ENCODE measurements at regions of chr4 and their contacts with region 1.

Region 1: DNA sequence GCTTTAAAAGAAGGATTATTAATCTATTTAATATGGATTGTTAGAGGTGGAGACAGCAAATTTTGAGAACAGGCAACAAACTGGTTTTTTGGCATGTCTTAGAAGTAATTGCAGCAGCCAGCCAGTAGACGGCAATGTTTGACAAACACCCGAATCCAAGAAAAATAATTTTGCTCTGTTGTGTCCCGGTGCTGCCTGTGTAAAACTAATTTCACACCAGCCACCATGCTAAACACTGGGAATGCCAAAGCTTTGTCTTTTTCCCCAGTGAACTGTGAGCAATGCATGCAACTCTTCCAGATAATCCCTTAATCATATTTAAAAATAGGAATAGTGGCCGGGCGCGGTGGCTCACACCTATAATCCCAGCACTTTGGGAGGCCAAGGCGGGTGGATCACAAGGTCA is 25.9 kb downstream of the SMIM31 start:
- DNase-seq: no peak
- ATAC-seq: peak in 1 of 4 donors; percentile 27
- H3K4me3 ChIP-seq: no peak overlapping the region
- H3K27ac ChIP-seq: no peak overlapping the region
- H3K4me1 ChIP-seq: no peaks in the 10 kb centered on the region
- H3K27me3 ChIP-seq: no peaks in the 10 kb centered on the region
- CTCF ChIP-seq: peak; percentile 35

Region 2: DNA sequence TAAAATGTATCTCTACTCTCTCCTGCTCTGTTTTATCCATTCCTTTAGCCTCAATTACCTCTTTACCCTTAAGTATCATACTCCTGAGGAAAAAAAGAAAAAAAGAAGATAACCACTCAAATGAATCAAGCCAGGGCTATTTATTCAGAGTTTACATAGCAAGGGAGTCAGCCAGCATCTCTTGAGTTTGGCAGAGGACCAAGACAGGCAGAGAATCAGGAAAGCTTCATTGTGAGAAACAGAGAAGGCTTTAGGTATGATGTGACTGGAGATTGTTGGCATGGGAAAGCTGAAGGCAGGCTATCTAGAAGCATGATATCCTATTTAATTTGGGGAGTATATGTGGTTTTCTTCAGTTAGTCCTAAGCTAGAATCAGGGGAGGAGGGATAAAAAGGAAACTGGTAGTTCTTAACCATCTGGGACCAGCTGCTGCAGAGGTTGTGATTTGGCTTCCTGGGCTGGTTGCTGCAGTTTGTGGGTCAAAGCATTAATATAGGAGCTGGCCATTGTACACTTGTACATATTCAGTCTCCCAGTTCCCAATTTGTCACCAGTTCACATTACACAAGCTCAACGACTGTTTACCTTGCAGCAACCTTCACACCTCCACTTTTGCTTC is 108.4 kb after region 1 on chr4:
- intact Hi-C with region 1: no loop called
- DNase-seq: no peak
- ATAC-seq: no peak
- H3K4me3 ChIP-seq: no peak overlapping the region
- H3K27ac ChIP-seq: no peak overlapping the region
- H3K4me1 ChIP-seq: no peaks in the 10 kb centered on the region
- H3K27me3 ChIP-seq: no peaks in the 10 kb centered on the region
- CTCF ChIP-seq: no peak

Region 3: GRCh38 chr4:165096776-165097175 is 317.0 kb after region 1 on chr4:
- intact Hi-C with region 1: loop called in 1 of 2 experiments (anchors 10 kb)
- DNase-seq: no peak
- ATAC-seq: no peak
- H3K4me3 ChIP-seq: no peak overlapping the region
- H3K27ac ChIP-seq: no peak overlapping the region
- H3K4me1 ChIP-seq: no peaks in the 10 kb centered on the region
- H3K27me3 ChIP-seq: no peaks in the 10 kb centered on the region
- CTCF ChIP-seq: peak; percentile 51

Measured in psoas muscle (tissue), 8 donors.